Ascending aorta (tissue), 2 donors: ENCODE measurements at regions of chr12 and their contacts with region 1.

Region 1: DNA sequence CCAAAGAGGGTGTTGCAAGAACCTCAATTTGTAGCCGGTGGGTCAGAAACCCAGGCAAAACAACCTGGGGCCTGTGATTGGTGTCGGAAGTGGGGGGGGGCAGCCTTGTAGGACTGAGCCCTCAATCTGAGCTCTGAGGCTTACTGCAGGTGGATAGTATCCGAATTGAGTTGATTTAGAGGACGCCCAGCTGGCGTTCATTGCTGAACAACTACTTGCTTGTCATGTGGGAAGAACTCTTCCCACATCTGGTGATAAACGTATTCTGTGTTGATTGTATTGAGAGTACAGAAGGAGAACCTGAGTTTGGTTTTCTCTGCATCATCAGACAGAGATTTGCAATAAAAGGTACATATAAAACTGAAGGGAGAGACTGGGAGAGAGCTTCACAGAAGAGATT is 5.1 kb downstream of the ANO6 start:
- DNase-seq: no peak
- H3K4me3 ChIP-seq: peak overlapping the region in 1 of 2 donors; percentile 3
- H3K27ac ChIP-seq: peak overlapping the region; percentile 92 to 97
- H3K4me1 ChIP-seq: peaks cover 6 to 27% of the 10 kb centered on the region in 2 donors
- H3K27me3 ChIP-seq: no peaks in the 10 kb centered on the region
- CTCF ChIP-seq: no peak

Region 2: DNA sequence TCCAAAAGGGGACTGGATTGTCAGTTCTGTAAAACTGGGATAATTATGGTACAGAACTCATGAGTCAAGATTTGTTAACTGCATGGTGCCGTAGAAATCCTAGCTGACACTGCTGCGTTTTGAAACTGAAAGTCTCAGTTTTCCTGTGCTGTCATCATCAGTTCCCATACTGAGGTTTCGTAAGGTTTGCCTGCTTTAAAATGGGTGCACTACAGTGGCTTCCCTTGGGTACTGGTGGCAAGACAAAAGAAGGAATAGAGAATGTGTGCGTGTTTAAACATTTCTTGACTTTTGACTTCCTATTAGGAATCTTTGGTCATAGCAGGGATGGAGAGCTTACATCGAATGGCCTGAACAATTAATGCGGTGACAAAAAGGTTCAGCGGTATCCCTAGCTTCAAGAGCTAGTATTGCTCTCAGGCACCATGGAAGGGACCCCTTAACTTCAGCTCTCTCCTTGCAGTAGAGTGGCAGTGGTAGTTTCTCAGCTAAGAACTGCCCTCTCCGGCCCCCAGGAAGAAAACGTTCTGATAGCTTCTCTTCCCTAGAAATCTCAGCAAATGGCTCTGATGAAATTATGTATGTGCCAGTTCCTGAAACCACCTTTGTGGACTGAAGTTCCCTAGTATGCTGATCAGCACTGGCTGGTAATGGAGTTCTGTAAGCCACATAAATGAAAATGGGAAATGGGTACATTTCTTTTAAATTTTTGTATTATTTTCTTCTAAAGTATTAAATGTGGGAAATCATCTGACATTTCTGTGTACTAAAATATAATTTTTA is 23.8 kb after region 1 on chr12:
- intact Hi-C with region 1: loop called (anchors 1 kb)
- DNase-seq: no peak
- H3K4me3 ChIP-seq: peak overlapping the region; percentile 21 to 56
- H3K27ac ChIP-seq: peak overlapping the region; percentile 85 to 87
- H3K4me1 ChIP-seq: peaks cover 4 to 61% of the 10 kb centered on the region in 2 donors
- H3K27me3 ChIP-seq: no peaks in the 10 kb centered on the region
- CTCF ChIP-seq: no peak